ENCODE measurements at regions of chr4 and their contacts with region 1.

Region 1: GRCh38 chr4:103478729-103479128 is 241.1 kb downstream of the TACR3 start:
- DNase-seq: no peak
- ATAC-seq: no peak
- H3K4me3 Mint-ChIP-seq: no peak overlapping the region
- H3K27ac Mint-ChIP-seq: no peak overlapping the region
- H3K4me1 Mint-ChIP-seq: no peaks in the 10 kb centered on the region
- H3K27me3 Mint-ChIP-seq: no peaks in the 10 kb centered on the region

Region 2: DNA sequence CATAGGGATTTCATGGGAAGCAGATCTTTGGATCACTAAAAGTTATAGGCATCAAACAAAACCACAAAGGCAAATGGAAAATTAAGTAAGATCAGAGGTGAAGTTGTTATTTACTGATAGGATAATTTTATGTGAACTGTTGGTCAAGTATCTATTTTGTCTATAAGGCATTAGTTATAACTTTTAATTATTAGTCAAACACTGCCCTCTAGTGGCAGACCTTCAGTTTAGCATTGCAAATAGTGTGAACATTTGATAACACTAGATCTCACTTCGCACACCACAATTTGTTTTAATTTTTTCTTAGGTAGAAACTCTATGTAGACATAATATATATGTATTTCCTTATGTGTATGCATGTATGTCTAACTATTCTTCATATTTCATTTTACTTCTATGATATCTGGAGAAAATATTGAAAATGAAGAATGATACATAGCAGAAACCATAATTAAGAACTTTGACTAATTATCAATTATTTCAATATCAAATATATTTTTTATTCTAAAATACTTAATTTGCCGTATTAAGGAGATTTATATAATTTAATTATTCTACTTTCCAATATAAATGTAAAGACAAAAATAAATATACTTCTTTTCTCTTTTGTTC is 455.6 kb after region 1 on chr4:
- CTCF ChIA-PET with region 1: no interaction called
- POLR2A ChIA-PET with region 1: no interaction called
- intact Hi-C with region 1: loop called in 1 of 2 experiments (anchors 5 kb)
- DNase-seq: peak; percentile 14
- ATAC-seq: no peak
- H3K4me3 Mint-ChIP-seq: no peak overlapping the region
- H3K27ac Mint-ChIP-seq: no peak overlapping the region
- H3K4me1 Mint-ChIP-seq: no peaks in the 10 kb centered on the region
- H3K27me3 Mint-ChIP-seq: no peaks in the 10 kb centered on the region

Measured in activated CD4-positive, alpha-beta T cell treated with anti-CD3 and anti-CD28 coated beads for 36 hours (primary cell).